Caco-2 (cell line): ENCODE measurements at regions of chr9 and their contacts with region 1.

Region 1: DNA sequence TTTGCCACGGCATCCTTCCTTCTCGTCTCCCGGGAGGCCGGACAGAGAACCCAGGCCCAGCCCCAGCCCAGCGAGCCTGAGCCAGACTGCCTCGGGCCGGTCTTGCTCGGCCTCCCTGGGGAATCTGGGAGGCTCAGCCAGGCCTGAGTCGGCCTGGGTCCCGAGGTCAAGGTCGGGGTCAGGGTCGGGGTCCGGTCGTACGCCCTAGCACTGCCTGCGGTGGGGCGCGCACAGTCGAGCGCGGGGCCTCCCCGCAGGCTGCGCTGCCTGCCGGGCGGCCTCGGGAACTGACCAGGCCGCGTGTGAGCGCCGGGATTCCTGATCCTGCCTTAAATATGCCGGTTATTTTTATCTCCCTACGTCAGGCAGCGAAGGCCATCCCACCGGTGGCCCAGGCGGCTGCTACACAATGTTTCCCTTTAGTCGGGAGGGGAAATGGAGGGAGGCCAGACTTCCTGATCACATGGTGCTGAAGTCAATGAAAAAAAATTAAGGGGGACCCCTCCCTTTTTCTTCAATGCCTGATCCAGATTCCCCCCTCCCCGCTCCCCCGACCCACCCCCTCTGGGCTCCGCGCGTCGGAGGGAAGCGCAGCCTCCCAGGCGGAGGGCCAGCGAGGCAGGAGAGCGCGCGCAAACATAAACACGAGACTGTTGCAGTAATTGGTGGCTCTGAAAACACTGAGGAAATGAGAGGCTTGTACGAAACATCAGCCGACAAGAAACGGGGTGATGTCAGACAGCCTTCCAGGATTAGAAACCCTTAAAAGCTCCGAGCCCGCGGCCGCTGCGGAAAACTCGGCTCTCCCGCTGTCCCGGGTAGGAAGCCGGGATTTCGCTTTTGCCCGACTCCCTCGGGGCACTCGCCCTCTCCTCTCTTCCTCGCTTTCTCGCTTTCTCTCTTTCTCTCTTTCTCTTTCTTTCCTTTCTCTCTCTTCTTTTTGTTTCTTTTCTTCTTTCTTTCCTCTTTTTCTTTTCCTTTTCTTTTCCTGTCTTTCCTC is 148.2 kb upstream of the KLF4 start:
- DNase-seq: peak in 1 of 2 experiments; percentile 17
- H3K4me3 ChIP-seq: peak overlapping the region; percentile 6; the same call in 1 of the 2 replicates
- H3K4me3 Mint-ChIP-seq: peak overlapping the region; percentile 62
- H3K27ac Mint-ChIP-seq: peak overlapping the region; percentile 48
- H3K4me1 ChIP-seq: peaks cover 16% of the 10 kb centered on the region
- H3K4me1 Mint-ChIP-seq: peaks cover 31% of the 10 kb centered on the region
- H3K27me3 ChIP-seq: no peaks in the 10 kb centered on the region
- H3K27me3 Mint-ChIP-seq: no peaks in the 10 kb centered on the region
- CTCF ChIP-seq: no peak

Region 2: GRCh38 chr9:107504569-107505377 is 132.9 kb before region 1 on chr9:
- CTCF ChIA-PET with region 1: no interaction called
- POLR2A ChIA-PET with region 1: no interaction called
- intact Hi-C with region 1: loop called (anchors 1 kb)
- DNase-seq: peak; percentile 56 to 61
- H3K4me3 ChIP-seq: no peak overlapping the region
- H3K4me3 Mint-ChIP-seq: no peak overlapping the region
- H3K27ac Mint-ChIP-seq: no peak overlapping the region
- H3K4me1 ChIP-seq: peaks cover 9% of the 10 kb centered on the region
- H3K4me1 Mint-ChIP-seq: peaks cover 8% of the 10 kb centered on the region
- H3K27me3 ChIP-seq: no peaks in the 10 kb centered on the region
- H3K27me3 Mint-ChIP-seq: no peaks in the 10 kb centered on the region
- CTCF ChIP-seq: no peak

Region 3: GRCh38 chr9:107587191-107587963 is 50.3 kb before region 1 on chr9:
- CTCF ChIA-PET with region 1: no interaction called
- POLR2A ChIA-PET with region 1: no interaction called
- intact Hi-C with region 1: loop called (anchors 1 kb)
- DNase-seq: peak; percentile 62 to 80
- H3K4me3 ChIP-seq: peak overlapping the region; percentile 28
- H3K4me3 Mint-ChIP-seq: peak overlapping the region; percentile 72
- H3K27ac Mint-ChIP-seq: peak overlapping the region; percentile 55
- H3K4me1 ChIP-seq: peaks cover 21% of the 10 kb centered on the region
- H3K4me1 Mint-ChIP-seq: peaks cover 44% of the 10 kb centered on the region
- H3K27me3 ChIP-seq: no peaks in the 10 kb centered on the region
- H3K27me3 Mint-ChIP-seq: no peaks in the 10 kb centered on the region
- CTCF ChIP-seq: no peak

Region 4: DNA sequence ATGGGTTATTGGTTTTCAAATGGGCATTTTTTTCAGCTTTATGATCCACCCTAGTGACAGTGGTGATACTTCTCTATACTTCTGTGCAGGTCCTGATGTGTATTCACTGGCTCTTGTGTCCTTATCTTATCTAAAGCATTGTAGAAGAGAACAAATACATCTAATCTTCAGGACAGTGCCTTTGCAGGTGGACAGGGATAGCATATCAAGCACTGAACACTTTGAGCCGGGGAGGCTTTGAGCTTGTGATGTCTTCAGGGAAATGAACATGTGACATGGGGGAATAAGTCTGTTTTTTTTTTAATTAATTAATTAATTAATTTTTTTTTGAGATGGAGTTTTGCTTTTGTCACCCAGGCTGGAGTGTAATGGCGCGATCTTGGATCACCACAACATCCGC is 32.7 kb before region 1 on chr9:
- CTCF ChIA-PET with region 1: no interaction called
- POLR2A ChIA-PET with region 1: no interaction called
- intact Hi-C with region 1: loop called (anchors 1 kb)
- DNase-seq: peak; percentile 62 to 77
- H3K4me3 ChIP-seq: no peak overlapping the region
- H3K4me3 Mint-ChIP-seq: peak overlapping the region; percentile 20
- H3K27ac Mint-ChIP-seq: no peak overlapping the region
- H3K4me1 ChIP-seq: peaks cover 8% of the 10 kb centered on the region
- H3K4me1 Mint-ChIP-seq: peaks cover 8% of the 10 kb centered on the region
- H3K27me3 ChIP-seq: no peaks in the 10 kb centered on the region
- H3K27me3 Mint-ChIP-seq: peaks cover 3% of the 10 kb centered on the region
- CTCF ChIP-seq: no peak

Region 5: GRCh38 chr9:107612136-107612535 is 25.6 kb before region 1 on chr9:
- CTCF ChIA-PET with region 1: no interaction called
- POLR2A ChIA-PET with region 1: no interaction called
- intact Hi-C with region 1: loop called (anchors 1 kb)
- DNase-seq: no peak
- H3K4me3 ChIP-seq: no peak overlapping the region
- H3K4me3 Mint-ChIP-seq: no peak overlapping the region
- H3K27ac Mint-ChIP-seq: no peak overlapping the region
- H3K4me1 ChIP-seq: peaks cover 23% of the 10 kb centered on the region
- H3K4me1 Mint-ChIP-seq: peaks cover 13% of the 10 kb centered on the region
- H3K27me3 ChIP-seq: no peaks in the 10 kb centered on the region
- H3K27me3 Mint-ChIP-seq: peaks cover 3% of the 10 kb centered on the region
- CTCF ChIP-seq: no peak